Lower leg skin (tissue), 4 donors: ENCODE measurements at regions of chr11 and their contacts with region 1.

Region 1: DNA sequence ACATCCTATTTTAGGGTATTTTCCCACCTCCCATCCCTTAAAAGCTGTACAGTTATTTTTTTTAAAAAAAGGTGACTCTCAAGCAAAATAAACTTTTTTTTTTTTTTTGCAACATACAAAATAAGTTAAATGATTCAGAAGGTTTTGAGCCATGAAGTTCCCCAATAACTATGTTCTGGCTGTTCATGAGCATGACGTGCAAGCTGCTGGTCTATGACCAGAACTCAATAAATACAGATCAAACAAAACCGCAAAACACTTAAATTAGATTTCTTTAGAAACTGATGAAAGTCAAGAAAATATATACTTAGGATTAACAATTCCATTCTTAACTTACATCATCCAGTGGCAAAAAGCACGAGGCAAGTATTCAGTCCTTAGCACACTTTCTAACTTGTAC is 24.1 kb upstream of the CLNS1A start:
- DNase-seq: no peak
- H3K4me3 ChIP-seq: no peak overlapping the region
- CTCF ChIP-seq: no peak
- POLR2A ChIP-seq: no peak

Region 2: GRCh38 chr11:77602381-77603088 is 59.1 kb before region 1 on chr11:
- intact Hi-C with region 1: loop called (anchors 2 kb)
- DNase-seq: no peak
- H3K4me3 ChIP-seq: no peak overlapping the region
- CTCF ChIP-seq: no peak
- POLR2A ChIP-seq: no peak

Region 3: DNA sequence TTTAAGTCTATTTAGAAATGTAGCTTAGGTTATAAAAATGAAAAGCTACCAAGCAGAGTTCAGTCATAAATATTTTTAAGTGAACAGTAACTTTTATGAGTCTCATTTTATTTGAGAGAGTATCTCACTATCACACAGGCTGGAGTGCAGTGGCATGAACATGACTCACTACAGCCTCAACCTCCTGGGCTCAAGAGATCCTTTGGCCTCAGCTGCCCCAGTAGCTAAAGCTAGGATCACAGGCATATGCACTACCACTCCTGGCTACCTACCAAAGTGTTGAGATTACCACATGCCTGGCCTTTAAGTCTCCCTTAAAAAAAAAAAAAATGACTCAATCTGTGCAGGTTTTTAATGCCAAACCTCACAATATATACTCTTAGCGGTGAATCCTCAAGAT is 10.6 kb after region 1 on chr11:
- intact Hi-C with region 1: no loop called
- DNase-seq: no peak
- H3K4me3 ChIP-seq: no peak overlapping the region
- CTCF ChIP-seq: no peak
- POLR2A ChIP-seq: no peak